ENCODE measurements at regions of chr16 and their contacts with region 1.

Region 1: GRCh38 chr16:3129137-3130131 is 5.4 kb upstream of the ZNF213 start:
- DNase-seq: peak; percentile 56

Region 2: DNA sequence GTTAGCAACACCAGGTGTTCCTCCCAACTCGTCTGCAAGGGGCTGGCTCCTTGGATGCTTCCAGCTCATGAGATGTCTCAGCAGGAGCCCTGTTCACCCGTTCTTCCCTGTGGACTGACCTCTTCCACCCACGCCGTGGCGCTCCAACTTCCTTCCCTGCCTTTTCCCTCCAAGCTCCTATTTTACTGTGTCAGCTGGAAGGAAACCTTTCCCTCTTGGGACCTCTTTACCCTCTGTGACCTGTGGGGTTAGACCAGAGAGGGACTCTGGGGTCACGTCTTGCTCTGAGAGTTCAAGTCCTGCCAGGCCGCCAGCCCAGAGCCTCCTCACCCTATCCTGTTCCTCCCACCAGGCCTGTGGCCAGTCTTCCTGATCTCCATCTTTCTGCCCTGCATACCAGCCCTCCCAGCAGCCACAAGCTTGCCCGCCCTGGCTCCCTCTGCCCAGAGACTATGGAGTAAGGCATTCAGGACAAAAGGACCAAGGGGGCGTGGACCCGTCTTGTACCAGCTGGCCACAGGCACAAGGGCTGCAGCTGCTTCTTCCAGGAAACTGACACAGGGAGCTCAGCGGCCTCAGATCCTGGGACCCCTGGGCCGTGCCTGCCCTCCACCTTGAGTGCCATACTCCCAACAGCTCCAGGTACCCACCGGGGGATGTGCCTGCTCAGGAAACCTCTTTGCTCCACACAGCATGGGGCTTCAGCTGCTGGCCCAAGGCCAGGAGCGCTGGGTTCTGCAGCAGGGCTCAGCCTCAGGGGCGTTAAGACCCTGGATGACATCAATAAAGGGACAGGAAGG is 157.2 kb before region 1 on chr16:
- CTCF ChIA-PET with region 1: no interaction called
- POLR2A ChIA-PET with region 1: no interaction called
- DNase-seq: no peak

Region 3: GRCh38 chr16:3059000-3059722 is 70.3 kb before region 1 on chr16:
- CTCF ChIA-PET with region 1: interaction called, 11 read pairs
- POLR2A ChIA-PET with region 1: interaction called, 8 read pairs
- DNase-seq: peak; percentile 95

Region 4: GRCh38 chr16:3098459-3099394 is 30.7 kb before region 1 on chr16 and contains the start of gene ZSCAN10:
- CTCF ChIA-PET with region 1: interaction called, 14 read pairs
- POLR2A ChIA-PET with region 1: interaction called, 4 read pairs
- DNase-seq: no peak

Region 5: DNA sequence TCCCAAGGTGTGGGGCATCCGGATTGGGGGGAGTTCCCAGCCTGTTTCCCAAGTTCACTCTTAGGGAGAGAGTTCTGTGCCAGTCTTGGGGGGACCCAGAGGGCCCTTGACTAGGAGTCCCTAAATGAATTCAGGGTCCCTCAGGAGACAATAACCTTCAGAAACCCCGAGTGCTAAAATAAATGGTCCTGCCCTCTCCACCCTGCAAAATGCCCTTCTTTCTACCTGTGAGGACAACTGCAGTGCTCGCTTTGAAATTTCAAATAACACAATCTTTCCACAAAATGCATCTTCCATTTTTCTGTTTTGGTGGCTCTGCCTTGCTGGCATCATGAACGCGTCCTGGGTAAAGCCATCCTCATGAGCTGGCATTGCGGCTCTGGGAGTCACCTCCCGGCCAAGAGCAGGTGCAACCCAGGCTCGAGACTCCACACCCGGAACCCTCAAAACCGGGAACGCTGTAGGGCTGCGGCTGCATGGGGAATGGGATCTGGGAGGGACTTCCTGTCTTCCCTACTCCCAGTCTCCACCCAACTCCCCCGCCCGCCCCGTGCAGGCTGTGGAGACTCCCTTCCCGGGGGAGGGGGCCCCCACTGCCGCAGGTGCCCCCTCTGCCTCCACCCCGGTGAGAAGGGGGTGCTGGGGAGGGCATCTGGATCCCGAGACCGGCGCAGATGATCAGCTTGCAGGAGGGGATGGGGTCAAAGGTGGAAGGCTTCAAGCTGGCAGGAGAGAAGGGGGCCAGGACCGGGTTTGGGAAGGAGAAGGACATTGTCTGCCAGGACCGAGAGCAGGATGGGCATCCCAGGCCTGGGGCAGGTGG is 17.2 kb before region 1 on chr16 and contains the start of gene ZNF205:
- CTCF ChIA-PET with region 1: interaction called, 10 read pairs
- POLR2A ChIA-PET with region 1: interaction called, 16 read pairs
- DNase-seq: peak; percentile 84

Region 6: DNA sequence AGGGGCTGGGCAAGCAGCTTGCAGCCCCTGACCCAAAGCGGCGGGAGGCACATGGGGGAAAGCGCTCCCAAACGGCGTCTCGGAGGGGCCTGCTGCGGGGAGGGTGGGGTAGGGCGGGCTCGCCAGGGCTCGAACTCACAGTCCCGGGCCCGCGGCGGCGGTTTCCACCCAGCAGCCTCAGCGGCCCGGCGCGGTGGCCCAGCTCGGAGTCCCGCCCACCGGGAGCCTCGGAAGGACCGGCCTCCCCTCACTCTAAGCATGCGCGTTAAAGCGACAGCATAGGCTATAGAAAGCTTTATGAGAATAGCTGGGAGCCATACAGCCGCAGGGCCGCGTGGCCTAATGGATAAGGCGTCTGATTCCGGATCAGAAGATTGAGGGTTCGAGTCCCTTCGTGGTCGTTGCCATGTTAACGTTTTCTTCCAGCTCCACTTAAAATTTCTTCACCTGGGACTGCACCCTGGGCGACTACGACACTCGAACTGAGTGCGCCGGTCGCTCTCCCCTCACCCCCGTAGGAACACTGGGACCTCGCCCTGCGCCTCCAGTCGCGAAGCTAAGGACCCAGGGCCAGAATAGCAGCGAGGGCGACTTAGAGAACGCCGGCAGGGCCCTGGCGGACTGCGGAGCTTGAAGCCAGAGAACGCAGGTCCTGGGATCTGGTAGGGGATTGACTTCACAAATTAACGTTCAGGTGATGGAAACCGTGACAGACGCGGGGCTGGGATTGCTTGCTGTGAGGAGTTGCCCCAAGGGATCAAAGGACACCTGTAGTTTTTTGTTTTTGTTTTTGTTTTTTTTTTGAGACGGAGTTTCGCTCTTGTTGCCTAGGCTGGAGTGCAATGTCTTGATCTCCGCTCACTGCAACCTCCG is 21.1 kb after region 1 on chr16:
- CTCF ChIA-PET with region 1: interaction called, 20 read pairs
- POLR2A ChIA-PET with region 1: interaction called, 78 read pairs
- DNase-seq: peak; percentile 95

Measured in HEK293T (cell line).